ENCODE measurements at regions of chr11 and their contacts with region 1.

Region 1: GRCh38 chr11:118227865-118228785 is 3.3 kb upstream of the JAML start:
- DNase-seq: peak; percentile 43
- H3K4me3 Mint-ChIP-seq: peak overlapping the region; percentile 45
- H3K27ac Mint-ChIP-seq: no peak overlapping the region
- H3K4me1 Mint-ChIP-seq: peaks cover 47% of the 10 kb centered on the region
- H3K27me3 Mint-ChIP-seq: no peaks in the 10 kb centered on the region

Region 2: GRCh38 chr11:118247047-118247446 is 18.9 kb after region 1 on chr11:
- CTCF ChIA-PET with region 1: interaction called, 9 read pairs
- POLR2A ChIA-PET with region 1: interaction called, 97 read pairs
- intact Hi-C with region 1: loop called (anchors 1 kb)
- DNase-seq: no peak
- H3K4me3 Mint-ChIP-seq: peak overlapping the region; percentile 11
- H3K27ac Mint-ChIP-seq: peak overlapping the region; percentile 87
- H3K4me1 Mint-ChIP-seq: peaks cover 71% of the 10 kb centered on the region
- H3K27me3 Mint-ChIP-seq: no peaks in the 10 kb centered on the region

Region 3: GRCh38 chr11:118251858-118252652 is 23.9 kb after region 1 on chr11 and contains the start of gene MPZL3:
- CTCF ChIA-PET with region 1: interaction called, 9 read pairs
- POLR2A ChIA-PET with region 1: interaction called, 15 read pairs
- intact Hi-C with region 1: loop called (anchors 1 kb)
- DNase-seq: peak; percentile 89
- H3K4me3 Mint-ChIP-seq: peak within 1 kb of the TSS; percentile 99
- H3K27ac Mint-ChIP-seq: peak within 1 kb of the TSS; percentile 97
- H3K4me1 Mint-ChIP-seq: peaks cover 37% of the 10 kb centered on the region
- H3K27me3 Mint-ChIP-seq: no peaks in the 10 kb centered on the region
- total RNA-seq, gene MPZL3: 47.3 to 49.0 TPM

Region 4: GRCh38 chr11:118338637-118339061 is 110.5 kb after region 1 on chr11:
- CTCF ChIA-PET with region 1: interaction called, 3 read pairs
- POLR2A ChIA-PET with region 1: interaction called, 11 read pairs
- intact Hi-C with region 1: no loop called
- DNase-seq: peak; percentile 95
- H3K4me3 Mint-ChIP-seq: peak overlapping the region; percentile 82
- H3K27ac Mint-ChIP-seq: peak overlapping the region; percentile 98
- H3K4me1 Mint-ChIP-seq: peaks cover 48% of the 10 kb centered on the region
- H3K27me3 Mint-ChIP-seq: no peaks in the 10 kb centered on the region